IMR-90 (cell line): ENCODE measurements at regions of chr3 and their contacts with region 1.

Region 1: DNA sequence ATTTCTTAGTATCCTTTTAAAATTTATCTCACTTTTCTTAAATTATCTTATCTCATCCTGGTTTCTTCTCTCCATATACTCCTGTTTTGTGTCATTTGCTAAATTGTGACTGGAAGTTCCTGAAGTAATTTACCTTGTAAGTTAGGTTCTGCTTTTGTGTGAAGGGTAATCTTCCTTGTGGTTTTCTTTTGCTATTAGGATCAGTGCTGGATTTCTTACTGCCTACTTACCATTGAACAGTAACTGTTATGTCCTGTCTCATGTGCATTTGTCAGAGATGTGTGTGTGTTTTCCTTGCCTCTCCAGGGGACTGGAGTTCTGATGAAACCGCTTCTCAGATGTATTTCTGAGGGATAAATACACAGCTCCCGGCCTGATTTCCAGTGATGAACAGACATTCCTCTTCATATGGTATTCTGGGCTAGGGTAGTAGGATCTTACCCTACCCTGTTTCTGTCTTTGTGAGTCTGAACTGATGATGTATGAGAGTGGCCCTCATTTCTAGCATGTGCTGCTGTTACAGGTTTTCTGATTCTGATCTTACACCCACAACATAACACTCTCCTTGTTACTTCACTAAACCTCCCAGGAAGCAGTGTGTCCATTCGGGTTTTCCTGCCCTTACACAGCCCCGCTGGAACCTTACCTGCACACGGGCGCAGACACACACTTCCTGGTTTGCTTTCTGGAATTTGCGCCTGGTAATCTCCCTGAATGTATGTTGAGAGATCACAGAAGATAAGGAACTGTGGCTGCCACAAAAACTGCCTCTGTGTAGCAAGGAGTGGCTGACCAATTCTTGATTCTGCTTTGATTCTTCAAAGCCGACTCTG is 14.7 kb downstream of the PAK2 start:
- DNase-seq: no peak
- ATAC-seq: peak; percentile 41
- H3K4me3 ChIP-seq: no peak overlapping the region
- H3K27ac ChIP-seq: no peak overlapping the region
- H3K4me1 ChIP-seq: peaks cover 5% of the 10 kb centered on the region
- H3K27me3 ChIP-seq: no peaks in the 10 kb centered on the region
- CTCF ChIP-seq: no peak
- POLR2A ChIP-seq: no peak
- RAD21 ChIP-seq: no peak

Region 2: GRCh38 chr3:196793235-196793641 is 38.9 kb after region 1 on chr3:
- CTCF ChIA-PET with region 1: interaction called, 3 read pairs
- POLR2A ChIA-PET with region 1: no interaction called
- dilution Hi-C with region 1: no loop called
- in situ Hi-C with region 1: no loop called
- intact Hi-C with region 1: loop called (anchors 5 kb)
- DNase-seq: peak; percentile 97
- ATAC-seq: peak; percentile 79
- H3K4me3 ChIP-seq: no peak overlapping the region
- H3K27ac ChIP-seq: no peak overlapping the region
- H3K4me1 ChIP-seq: peaks cover 13% of the 10 kb centered on the region
- H3K27me3 ChIP-seq: no peaks in the 10 kb centered on the region
- CTCF ChIP-seq: no peak
- POLR2A ChIP-seq: no peak
- RAD21 ChIP-seq: no peak